CD4-positive, alpha-beta T cell (primary cell): ENCODE measurements at regions of chr7 and their contacts with region 1.

Region 1: DNA sequence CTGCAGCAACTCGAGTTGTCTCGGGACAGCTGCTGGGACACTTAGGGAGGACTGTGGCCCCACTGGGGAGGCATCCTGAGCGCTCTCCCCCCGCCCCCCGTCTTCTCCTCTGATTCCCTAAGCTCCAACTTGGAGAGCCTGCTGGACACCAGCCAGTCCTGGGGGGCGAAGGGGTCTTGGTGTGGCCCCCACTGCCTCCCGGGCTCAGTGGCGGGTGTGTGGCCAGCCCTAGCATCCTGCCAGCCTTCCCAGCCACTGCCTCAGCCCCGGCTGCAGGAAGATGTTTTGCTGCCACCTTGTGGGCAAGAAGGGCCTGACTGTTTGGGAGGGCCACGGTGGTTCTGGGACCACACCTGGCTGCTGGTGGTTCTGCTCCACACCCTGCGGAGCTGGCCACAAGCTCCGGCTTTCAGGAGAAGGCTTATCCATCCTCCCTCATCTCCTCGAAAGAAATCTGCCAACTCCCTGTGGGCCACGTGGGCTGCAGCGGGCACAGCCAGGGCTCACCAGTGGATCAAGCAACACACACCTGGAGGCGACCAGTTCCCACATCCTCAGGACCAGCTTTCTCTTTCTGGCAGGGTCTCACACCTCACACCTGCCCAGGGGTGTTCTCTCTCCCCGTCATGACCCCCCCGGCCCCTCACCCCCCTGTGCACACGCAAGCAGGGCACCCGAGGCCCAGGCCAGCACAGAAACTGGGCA is 24.8 kb downstream of the AGAP3 start:
- DNase-seq: peak; percentile 60 to 85 (median 72)
- ATAC-seq: peak; percentile 75
- H3K4me3 ChIP-seq: no peak overlapping the region
- H3K4me3 Mint-ChIP-seq: no peak overlapping the region
- H3K27ac ChIP-seq: no peak overlapping the region
- H3K27ac Mint-ChIP-seq: no peak overlapping the region
- H3K4me1 ChIP-seq: peaks cover 20% of the 10 kb centered on the region
- H3K4me1 Mint-ChIP-seq: peaks cover 9% of the 10 kb centered on the region
- H3K27me3 ChIP-seq: peaks cover 5 to 10% of the 10 kb centered on the region in 2 experiments
- H3K27me3 Mint-ChIP-seq: peaks cover 22% of the 10 kb centered on the region
- CTCF ChIP-seq: peak; percentile 80

Region 2: DNA sequence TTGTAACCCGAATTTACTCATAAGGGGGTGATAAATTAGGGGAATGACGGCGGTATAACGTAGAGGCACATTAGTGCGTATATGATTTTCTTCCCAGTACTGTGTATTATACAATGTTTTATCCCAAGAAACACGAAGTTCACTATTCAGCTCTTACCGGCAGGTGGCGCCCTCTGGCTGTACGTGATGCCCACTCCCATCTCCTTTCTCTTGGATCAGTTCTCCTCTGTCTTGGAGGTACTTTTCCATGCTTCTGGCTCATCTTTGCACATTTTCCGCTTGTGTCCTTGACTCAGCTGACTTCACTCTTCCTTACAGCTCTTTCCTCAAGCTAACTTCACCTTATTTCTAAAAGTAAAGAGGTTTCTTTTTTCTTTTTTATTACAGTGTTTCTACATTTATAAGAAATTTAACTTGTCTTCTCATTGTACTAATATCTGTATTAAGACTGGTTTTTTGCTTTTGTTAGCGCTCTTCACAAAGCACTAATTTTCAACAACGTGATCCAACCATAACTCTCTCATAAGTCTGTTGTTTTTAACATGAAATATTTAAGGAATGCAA is 332.3 kb before region 1 on chr7:
- CTCF ChIA-PET with region 1: interaction called, 6 read pairs
- POLR2A ChIA-PET with region 1: no interaction called
- intact Hi-C with region 1: loop called in 1 of 2 experiments (anchors 2 kb)
- DNase-seq: peak; percentile 59 to 85 (median 66)
- ATAC-seq: peak; percentile 71
- H3K4me3 ChIP-seq: no peak overlapping the region
- H3K4me3 Mint-ChIP-seq: no peak overlapping the region
- H3K27ac ChIP-seq: no peak overlapping the region
- H3K27ac Mint-ChIP-seq: no peak overlapping the region
- H3K4me1 ChIP-seq: peaks cover 6% of the 10 kb centered on the region
- H3K4me1 Mint-ChIP-seq: peaks cover 5% of the 10 kb centered on the region
- H3K27me3 ChIP-seq: peaks cover 0 to 3% of the 10 kb centered on the region in 2 experiments
- H3K27me3 Mint-ChIP-seq: peaks cover 4% of the 10 kb centered on the region
- CTCF ChIP-seq: peak; percentile 94

Region 3: DNA sequence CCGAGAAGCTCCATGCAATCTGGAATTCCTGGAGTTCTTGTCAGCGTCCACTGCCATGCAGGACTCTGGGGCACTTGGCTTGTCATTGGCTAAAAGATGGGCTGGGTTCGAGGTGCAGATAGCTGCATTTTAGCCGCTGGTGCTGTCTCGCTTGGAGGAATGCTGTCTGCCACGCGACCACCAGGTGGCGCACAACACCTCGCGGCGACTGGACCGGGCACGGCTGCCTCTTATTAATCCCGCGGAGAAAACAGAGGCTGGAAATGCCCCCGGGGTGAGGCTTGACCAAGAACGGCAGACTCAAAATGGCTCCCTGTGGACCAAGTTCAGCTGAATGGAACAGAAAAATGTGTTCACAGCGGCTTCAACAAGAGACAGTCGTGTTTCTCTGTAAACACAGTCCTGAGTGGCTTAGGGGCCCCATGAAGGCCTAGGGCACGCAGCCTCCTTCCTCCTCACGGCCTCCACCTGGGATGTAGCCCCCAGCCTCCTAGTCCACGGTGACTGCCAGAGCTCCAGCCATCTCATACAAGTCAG is 212.6 kb before region 1 on chr7:
- CTCF ChIA-PET with region 1: interaction called, 9 read pairs
- POLR2A ChIA-PET with region 1: no interaction called
- intact Hi-C with region 1: loop called (anchors 1 kb)
- DNase-seq: peak; percentile 58 to 87 (median 76)
- ATAC-seq: peak; percentile 87
- H3K4me3 ChIP-seq: no peak overlapping the region
- H3K4me3 Mint-ChIP-seq: no peak overlapping the region
- H3K27ac ChIP-seq: no peak overlapping the region
- H3K27ac Mint-ChIP-seq: no peak overlapping the region
- H3K4me1 ChIP-seq: peaks cover 13% of the 10 kb centered on the region
- H3K4me1 Mint-ChIP-seq: no peaks in the 10 kb centered on the region
- H3K27me3 ChIP-seq: peaks cover 25 to 32% of the 10 kb centered on the region in 2 experiments
- H3K27me3 Mint-ChIP-seq: peaks cover 67% of the 10 kb centered on the region
- CTCF ChIP-seq: peak; percentile 95

Region 4: DNA sequence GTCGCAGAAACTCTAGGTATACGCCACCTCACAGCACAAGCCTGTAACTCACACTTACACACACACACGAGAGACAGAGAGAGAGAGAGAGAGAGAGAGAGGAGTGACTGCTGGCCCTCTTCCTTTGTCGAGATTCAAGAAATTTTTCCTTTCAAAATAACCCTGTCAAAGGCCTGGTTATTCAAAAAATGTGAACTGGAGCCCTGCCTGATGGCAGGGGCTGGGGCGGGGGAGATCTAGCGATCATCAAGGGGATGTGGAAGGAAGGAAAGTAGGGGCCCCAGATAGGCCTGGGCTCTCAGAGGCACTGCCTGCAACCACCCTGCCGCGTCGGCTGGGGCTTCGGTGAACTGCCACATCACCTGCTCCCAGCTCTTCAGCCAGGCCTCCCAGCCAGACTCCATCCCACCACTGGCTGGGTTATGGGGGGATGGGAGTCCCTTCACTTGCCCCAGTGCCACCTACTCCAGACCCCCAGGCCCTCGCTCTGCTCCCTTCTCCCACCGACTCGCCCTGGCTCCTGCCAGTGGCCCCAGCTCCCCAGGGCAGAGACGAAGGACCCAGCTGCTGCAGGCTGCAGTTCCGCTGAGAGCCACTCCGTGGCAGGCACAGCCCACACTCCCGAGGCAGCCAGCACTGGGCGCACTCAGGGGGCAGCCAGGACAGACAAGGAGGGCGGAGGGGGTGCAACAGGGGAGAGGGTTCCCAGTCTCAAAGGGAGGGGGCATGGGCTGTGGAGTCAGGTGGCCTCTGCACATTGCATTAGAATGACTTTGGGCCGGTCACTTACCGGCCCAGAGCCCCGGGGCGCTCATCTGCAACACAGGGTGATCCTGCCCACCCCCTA is 148.3 kb before region 1 on chr7:
- CTCF ChIA-PET with region 1: interaction called, 4 read pairs
- POLR2A ChIA-PET with region 1: no interaction called
- intact Hi-C with region 1: loop called (anchors 1 kb)
- DNase-seq: peak; percentile 41 to 81 (median 57)
- ATAC-seq: peak; percentile 90
- H3K4me3 ChIP-seq: no peak overlapping the region
- H3K4me3 Mint-ChIP-seq: no peak overlapping the region
- H3K27ac ChIP-seq: no peak overlapping the region
- H3K27ac Mint-ChIP-seq: no peak overlapping the region
- H3K4me1 ChIP-seq: peaks cover 22% of the 10 kb centered on the region
- H3K4me1 Mint-ChIP-seq: peaks cover 27% of the 10 kb centered on the region
- H3K27me3 ChIP-seq: peaks cover 11 to 15% of the 10 kb centered on the region in 2 experiments
- H3K27me3 Mint-ChIP-seq: peaks cover 28% of the 10 kb centered on the region
- CTCF ChIP-seq: peak; percentile 95

Region 5: DNA sequence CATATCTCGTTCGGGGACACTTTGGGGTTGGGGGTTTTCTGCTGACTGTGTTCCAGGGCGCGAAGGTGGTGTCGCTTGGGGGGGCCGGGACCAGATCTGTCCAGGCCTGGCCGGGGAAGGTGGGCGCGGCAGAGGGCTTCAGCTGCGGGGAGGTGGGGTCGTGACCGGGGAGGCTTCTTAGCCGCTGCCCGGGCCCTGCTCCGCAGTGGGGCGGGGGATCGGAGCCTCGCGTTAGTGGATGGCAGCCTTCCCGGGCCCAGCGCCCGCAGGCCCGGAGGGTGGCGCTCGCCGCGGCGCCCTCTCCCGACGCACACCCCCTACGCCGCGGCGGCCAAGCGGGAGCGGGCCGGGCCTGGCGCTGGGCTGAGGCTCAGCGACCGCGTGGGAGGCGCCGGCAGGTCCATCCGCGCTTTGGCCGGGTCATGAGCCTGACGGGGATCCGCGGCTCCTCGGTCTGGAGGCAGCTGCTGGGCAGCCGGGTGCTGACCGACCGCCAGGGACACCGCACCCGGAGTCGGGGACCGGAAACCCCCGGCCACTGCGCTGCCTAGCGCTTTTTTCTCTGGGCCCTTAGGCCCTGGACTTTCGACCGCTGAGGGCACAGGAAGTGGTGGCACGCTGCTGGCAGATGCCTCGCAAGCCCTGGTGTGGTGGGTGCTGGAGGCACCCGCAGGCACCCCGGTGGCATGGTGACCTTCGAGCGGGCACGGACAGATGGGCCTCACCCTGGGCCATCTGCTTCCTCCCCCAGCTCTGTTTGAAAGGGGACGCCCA is 23.7 kb before region 1 on chr7:
- CTCF ChIA-PET with region 1: interaction called, 4 read pairs
- POLR2A ChIA-PET with region 1: interaction called, 3 read pairs
- intact Hi-C with region 1: loop called in 1 of 2 experiments (anchors 2 kb)
- DNase-seq: peak in 7 of 14 experiments; percentile 22 to 77 (median 43)
- ATAC-seq: peak; percentile 9
- H3K4me3 ChIP-seq: peak overlapping the region; percentile 70
- H3K4me3 Mint-ChIP-seq: peak overlapping the region; percentile 90
- H3K27ac ChIP-seq: peak overlapping the region in 1 of 2 donors; percentile 4
- H3K27ac Mint-ChIP-seq: peak overlapping the region; percentile 86
- H3K4me1 ChIP-seq: peaks cover 66% of the 10 kb centered on the region
- H3K4me1 Mint-ChIP-seq: peaks cover 53% of the 10 kb centered on the region
- H3K27me3 ChIP-seq: no peaks in the 10 kb centered on the region
- H3K27me3 Mint-ChIP-seq: peaks cover 8% of the 10 kb centered on the region
- CTCF ChIP-seq: no peak